Common myeloid progenitor, CD34-positive (primary cell): ENCODE measurements at regions of chr13 and their contacts with region 1.

Region 1: DNA sequence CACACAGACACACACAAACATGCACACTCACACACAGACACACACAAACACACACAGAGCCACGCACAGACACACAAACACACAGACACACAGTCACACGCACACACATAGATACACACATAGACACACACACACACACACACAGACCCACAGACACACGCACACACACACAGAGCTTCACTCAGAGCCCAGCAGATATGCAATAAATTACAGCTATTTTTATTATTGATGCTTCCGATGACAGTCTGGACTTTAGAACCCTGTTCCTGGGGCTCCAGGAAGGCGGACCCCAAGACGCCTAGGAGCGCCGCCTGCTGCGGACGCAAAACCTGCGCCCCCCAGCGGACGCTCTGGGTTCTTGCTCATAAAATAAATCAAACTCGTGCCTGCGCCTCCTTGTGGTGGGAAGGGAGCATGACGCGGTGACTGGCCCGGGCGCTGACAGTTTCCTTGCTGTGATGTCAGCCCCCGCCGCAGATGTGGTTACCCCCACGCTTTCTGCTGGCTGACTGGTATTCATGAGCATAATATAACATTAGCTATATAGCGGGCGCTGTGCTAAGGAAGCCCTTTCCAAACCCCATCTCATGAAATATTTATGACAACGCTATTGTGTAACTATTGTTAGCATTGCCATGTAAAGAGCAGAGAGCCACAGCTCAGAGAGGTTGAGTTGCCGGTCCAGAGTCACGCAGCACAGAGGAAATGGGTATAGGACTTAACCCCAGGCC is 64.4 kb upstream of the TM9SF2 start:
- DNase-seq: peak; percentile 93 to 97 (median 96)
- H3K4me3 ChIP-seq: peak overlapping the region in 2 of 7 experiments; percentile 23 to 51
- H3K27ac ChIP-seq: no peak overlapping the region
- H3K4me1 ChIP-seq: peaks cover 5 to 26% (median 21%) of the 10 kb centered on the region in 4 experiments
- H3K27me3 ChIP-seq: peaks cover 0 to 3% (median 0%) of the 10 kb centered on the region in 5 experiments

Region 2: GRCh38 chr13:99176309-99177276 is 260.3 kb before region 1 on chr13:
- CTCF ChIA-PET with region 1: interaction called, 21 read pairs
- POLR2A ChIA-PET with region 1: no interaction called
- DNase-seq: peak; percentile 60 to 78 (median 71)
- H3K4me3 ChIP-seq: peak overlapping the region in 2 of 7 experiments; percentile 44 to 46
- H3K27ac ChIP-seq: no peak overlapping the region
- H3K4me1 ChIP-seq: peaks cover 0 to 6% (median 4%) of the 10 kb centered on the region in 4 experiments
- H3K27me3 ChIP-seq: peaks cover 0 to 18% (median 5%) of the 10 kb centered on the region in 5 experiments

Region 3: GRCh38 chr13:99275093-99275469 is 161.8 kb before region 1 on chr13:
- CTCF ChIA-PET with region 1: interaction called, 196 read pairs
- POLR2A ChIA-PET with region 1: interaction called, 12 read pairs
- DNase-seq: peak in 2 of 3 donors; percentile 64 to 71
- H3K4me3 ChIP-seq: no peak overlapping the region
- H3K27ac ChIP-seq: no peak overlapping the region
- H3K4me1 ChIP-seq: peaks cover 34 to 66% (median 49%) of the 10 kb centered on the region in 4 experiments
- H3K27me3 ChIP-seq: no peaks in the 10 kb centered on the region

Region 4: GRCh38 chr13:99366075-99366987 is 70.5 kb before region 1 on chr13:
- CTCF ChIA-PET with region 1: interaction called, 10 read pairs
- POLR2A ChIA-PET with region 1: no interaction called
- DNase-seq: no peak
- H3K4me3 ChIP-seq: no peak overlapping the region
- H3K27ac ChIP-seq: no peak overlapping the region
- H3K4me1 ChIP-seq: no peaks in the 10 kb centered on the region
- H3K27me3 ChIP-seq: no peaks in the 10 kb centered on the region

Region 5: DNA sequence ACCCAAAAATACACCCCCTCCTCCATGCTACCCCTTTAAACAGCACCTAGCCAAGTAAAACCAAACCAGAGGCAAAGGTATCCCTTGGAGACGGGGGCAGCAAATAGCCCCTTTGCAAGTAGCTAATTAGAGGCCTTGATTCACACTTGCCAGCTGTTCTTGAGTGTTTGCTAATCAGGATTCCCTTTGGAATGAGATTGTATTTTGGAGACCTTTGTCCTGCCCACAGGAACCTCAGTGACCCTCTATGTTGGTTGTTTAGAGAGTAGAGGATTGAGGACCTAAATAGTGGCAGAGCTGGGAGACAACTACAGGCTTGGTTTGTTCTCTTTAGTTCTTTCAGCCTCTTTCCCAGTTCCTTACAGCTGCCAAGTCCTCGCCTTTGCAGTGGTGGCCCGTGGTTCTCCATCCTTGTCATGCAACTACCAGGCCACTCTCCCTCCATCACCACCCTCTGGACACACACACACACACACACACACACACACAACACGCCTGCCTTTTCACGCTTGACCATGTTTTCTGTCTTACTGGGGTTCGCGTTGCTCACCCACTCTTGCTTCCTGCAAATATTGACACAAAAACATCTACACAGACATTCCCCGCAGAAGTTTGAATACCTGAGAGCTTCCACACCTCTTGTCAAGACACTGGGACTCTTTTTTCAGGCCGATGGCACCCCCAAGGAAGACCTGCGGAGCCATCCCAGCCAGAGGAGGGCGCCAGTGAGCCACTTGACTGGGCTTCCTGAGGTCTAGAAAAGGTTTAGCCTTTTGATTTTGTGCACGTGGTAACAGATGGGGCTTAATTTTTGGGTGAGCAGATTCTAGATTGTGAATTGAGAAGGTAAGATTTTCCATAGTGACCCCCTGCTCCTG is 49.7 kb before region 1 on chr13:
- CTCF ChIA-PET with region 1: interaction called, 114 read pairs
- POLR2A ChIA-PET with region 1: no interaction called
- DNase-seq: peak; percentile 76 to 82 (median 77)
- H3K4me3 ChIP-seq: no peak overlapping the region
- H3K27ac ChIP-seq: no peak overlapping the region
- H3K4me1 ChIP-seq: peaks cover 3 to 26% (median 22%) of the 10 kb centered on the region in 4 experiments
- H3K27me3 ChIP-seq: no peaks in the 10 kb centered on the region

Region 6: GRCh38 chr13:99417201-99418102 is 19.4 kb before region 1 on chr13:
- CTCF ChIA-PET with region 1: interaction called, 60 read pairs
- POLR2A ChIA-PET with region 1: no interaction called
- DNase-seq: no peak
- H3K4me3 ChIP-seq: no peak overlapping the region
- H3K27ac ChIP-seq: no peak overlapping the region
- H3K4me1 ChIP-seq: peaks cover 4 to 63% (median 33%) of the 10 kb centered on the region in 4 experiments
- H3K27me3 ChIP-seq: no peaks in the 10 kb centered on the region

Region 7: GRCh38 chr13:99425485-99426341 is 11.1 kb before region 1 on chr13:
- CTCF ChIA-PET with region 1: interaction called, 60 read pairs
- POLR2A ChIA-PET with region 1: interaction called, 3 read pairs
- DNase-seq: peak in 2 of 3 donors; percentile 52 to 62
- H3K4me3 ChIP-seq: peak overlapping the region in 4 of 7 experiments; percentile 6 to 35 (median 16)
- H3K27ac ChIP-seq: no peak overlapping the region
- H3K4me1 ChIP-seq: peaks cover 6 to 38% (median 29%) of the 10 kb centered on the region in 4 experiments
- H3K27me3 ChIP-seq: no peaks in the 10 kb centered on the region

Region 8: DNA sequence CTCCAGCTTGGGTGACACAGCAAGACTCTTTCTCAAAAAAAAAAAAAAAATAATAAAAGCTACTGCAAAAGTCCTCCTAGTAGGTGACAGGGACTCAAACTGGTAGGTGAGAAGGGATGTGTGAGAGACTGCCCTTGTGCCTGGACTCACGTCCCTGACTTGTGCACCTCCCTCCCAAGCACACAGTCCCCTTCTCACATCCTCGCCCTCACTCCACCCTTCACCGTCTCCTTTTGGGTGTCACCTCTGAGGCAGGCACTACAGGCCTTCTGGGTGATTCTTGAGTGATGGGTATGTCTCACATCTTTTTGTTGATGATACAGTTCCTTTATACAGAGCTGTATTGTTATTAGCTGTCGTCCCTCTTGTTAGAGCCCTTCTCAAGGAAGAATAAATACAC is 234.9 kb after region 1 on chr13:
- CTCF ChIA-PET with region 1: no interaction called
- POLR2A ChIA-PET with region 1: no interaction called
- DNase-seq: no peak
- H3K4me3 ChIP-seq: no peak overlapping the region
- H3K27ac ChIP-seq: no peak overlapping the region
- H3K4me1 ChIP-seq: no peaks in the 10 kb centered on the region
- H3K27me3 ChIP-seq: no peaks in the 10 kb centered on the region